GM18951 (cell line): ENCODE measurements at regions of chr17 and their contacts with region 1.

Region 1: GRCh38 chr17:10226930-10227685 is 28.7 kb upstream of the GAS7 start:
- POLR2A ChIP-seq: no peak

Region 2: GRCh38 chr17:9968902-9969617 is 258.0 kb before region 1 on chr17:
- in situ Hi-C with region 1: loop called (anchors 10 kb)
- POLR2A ChIP-seq: no peak

Region 3: GRCh38 chr17:10984220-10984619 is 757.1 kb after region 1 on chr17:
- in situ Hi-C with region 1: no loop called
- POLR2A ChIP-seq: no peak